Activated B cell treated with CpG ODN at 0.5 μM for 24 hours (primary cell): ENCODE measurements at regions of chr17 and their contacts with region 1.

Region 1: DNA sequence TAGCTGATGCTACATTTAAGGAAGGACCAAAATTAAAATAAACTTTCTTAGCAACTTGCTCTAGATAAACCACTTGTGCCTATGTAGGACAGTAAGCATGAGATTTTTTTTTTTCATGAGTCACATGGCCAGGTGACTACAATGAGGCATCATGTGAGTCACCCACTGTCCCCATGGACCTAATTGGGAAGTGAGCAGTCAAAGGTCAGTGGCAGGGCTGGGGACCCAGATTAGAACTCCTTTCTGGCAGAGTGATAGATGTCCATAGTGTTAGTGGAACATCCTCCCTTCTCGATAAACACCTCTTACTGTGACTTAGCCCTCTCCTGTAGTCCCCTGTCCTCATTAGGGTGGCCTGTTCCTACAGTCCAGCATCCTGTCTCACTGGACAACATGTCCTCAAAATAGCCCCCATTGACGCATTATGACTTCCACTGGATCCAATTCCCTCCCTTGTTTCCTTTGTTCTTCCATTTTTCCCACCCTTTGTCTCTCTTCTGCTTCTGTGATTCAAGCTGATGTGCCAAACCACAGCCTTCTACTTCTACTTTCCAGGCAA is 12.4 kb downstream of the ITGB3 start:
- DNase-seq: no peak
- ATAC-seq: peak; percentile 89
- H3K4me3 Mint-ChIP-seq: peak overlapping the region; percentile 0
- H3K27ac Mint-ChIP-seq: peak overlapping the region; percentile 51
- H3K4me1 Mint-ChIP-seq: peaks cover 31% of the 10 kb centered on the region
- H3K27me3 Mint-ChIP-seq: no peaks in the 10 kb centered on the region
- CTCF ChIP-seq: no peak

Region 2: GRCh38 chr17:47279062-47279736 is 13.1 kb after region 1 on chr17:
- CTCF ChIA-PET with region 1: interaction called, 3 read pairs
- POLR2A ChIA-PET with region 1: no interaction called
- intact Hi-C with region 1: loop called (anchors 1 kb)
- DNase-seq: peak; percentile 43
- ATAC-seq: peak; percentile 94
- H3K4me3 Mint-ChIP-seq: peak overlapping the region; percentile 78
- H3K27ac Mint-ChIP-seq: peak overlapping the region; percentile 80
- H3K4me1 Mint-ChIP-seq: peaks cover 72% of the 10 kb centered on the region
- H3K27me3 Mint-ChIP-seq: no peaks in the 10 kb centered on the region
- CTCF ChIP-seq: no peak

Region 3: GRCh38 chr17:47286198-47286914 is 20.3 kb after region 1 on chr17:
- CTCF ChIA-PET with region 1: interaction called, 3 read pairs
- POLR2A ChIA-PET with region 1: interaction called, 5 read pairs
- intact Hi-C with region 1: loop called (anchors 2 kb)
- DNase-seq: peak; percentile 50
- ATAC-seq: peak; percentile 84
- H3K4me3 Mint-ChIP-seq: peak overlapping the region; percentile 57
- H3K27ac Mint-ChIP-seq: peak overlapping the region; percentile 92
- H3K4me1 Mint-ChIP-seq: peaks cover 54% of the 10 kb centered on the region
- H3K27me3 Mint-ChIP-seq: no peaks in the 10 kb centered on the region
- CTCF ChIP-seq: no peak

Region 4: DNA sequence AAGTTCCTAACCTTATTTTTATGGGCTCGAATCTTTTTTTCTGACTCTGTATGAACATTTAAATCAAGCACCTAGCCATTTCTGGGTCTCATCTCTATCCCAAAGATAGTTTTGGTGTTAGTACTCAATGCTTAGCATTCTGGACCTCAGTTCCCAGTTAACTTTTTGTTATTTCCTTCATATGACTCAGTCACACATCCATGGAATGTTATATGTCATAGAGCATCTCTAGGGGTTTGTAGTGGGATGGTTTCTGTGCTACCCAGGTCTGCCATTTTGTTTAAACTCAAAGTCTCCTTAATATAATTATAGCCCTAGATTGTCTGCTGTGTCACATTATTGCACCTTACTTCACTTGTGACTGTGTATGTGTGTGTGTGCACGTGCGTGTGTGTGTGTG is 147.8 kb after region 1 on chr17:
- CTCF ChIA-PET with region 1: no interaction called
- POLR2A ChIA-PET with region 1: no interaction called
- intact Hi-C with region 1: no loop called
- DNase-seq: no peak
- ATAC-seq: no peak
- H3K4me3 Mint-ChIP-seq: no peak overlapping the region
- H3K27ac Mint-ChIP-seq: no peak overlapping the region
- H3K4me1 Mint-ChIP-seq: no peaks in the 10 kb centered on the region
- H3K27me3 Mint-ChIP-seq: no peaks in the 10 kb centered on the region
- CTCF ChIP-seq: no peak

Region 5: DNA sequence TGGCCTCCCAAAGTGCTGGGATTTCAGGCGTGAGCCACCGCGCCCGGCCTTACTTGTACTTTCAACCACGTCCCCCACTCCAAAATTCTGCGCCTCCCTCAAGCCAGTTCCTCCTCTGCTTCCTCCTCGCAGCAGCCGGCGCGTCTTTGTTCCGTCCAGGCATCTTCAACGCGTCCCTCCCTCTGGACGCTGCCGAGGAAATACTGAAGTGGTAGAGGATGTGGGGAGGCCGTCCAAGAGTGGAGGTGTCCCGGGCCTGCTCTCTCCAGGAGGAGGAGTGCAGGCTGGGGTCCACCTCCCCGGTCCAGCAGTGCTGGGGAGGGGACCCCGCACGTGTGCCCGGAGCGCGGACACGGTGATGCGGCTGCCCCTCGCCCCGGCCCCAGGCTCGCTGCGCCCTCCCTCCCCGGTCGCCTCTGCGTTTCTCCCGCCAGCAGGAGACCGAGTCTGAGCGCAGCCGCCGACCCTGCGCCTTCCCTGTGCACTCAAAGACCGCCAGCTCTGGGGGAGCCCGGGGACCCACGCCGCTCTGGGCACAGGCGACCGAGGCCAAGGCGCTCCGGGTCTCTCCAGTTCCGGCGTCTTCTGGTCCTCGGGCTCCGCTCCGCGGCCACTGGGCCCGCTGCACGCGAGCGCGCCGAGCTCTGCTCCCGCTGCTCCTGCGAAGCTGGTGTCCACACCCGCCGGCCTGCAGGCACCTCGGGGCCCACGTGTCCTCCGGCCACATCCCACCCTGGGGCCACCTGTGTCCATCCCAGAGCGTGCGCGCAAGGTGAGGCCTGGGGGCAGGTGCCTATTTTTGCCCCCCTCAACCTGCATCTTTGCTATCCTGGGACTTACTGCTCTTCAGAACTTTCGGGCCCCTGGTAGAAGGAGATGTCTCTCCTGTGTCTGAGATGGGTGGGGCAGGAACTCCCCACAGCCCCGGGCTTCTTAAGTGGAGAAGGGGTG is 523.8 kb after region 1 on chr17:
- CTCF ChIA-PET with region 1: no interaction called
- POLR2A ChIA-PET with region 1: no interaction called
- intact Hi-C with region 1: no loop called
- DNase-seq: peak; percentile 48
- ATAC-seq: peak; percentile 80
- H3K4me3 Mint-ChIP-seq: peak overlapping the region; percentile 74
- H3K27ac Mint-ChIP-seq: no peak overlapping the region
- H3K4me1 Mint-ChIP-seq: peaks cover 9% of the 10 kb centered on the region
- H3K27me3 Mint-ChIP-seq: peaks cover 54% of the 10 kb centered on the region
- CTCF ChIP-seq: no peak